HCT116 (cell line): ENCODE measurements at regions of chr3 and their contacts with region 1.

Region 1: DNA sequence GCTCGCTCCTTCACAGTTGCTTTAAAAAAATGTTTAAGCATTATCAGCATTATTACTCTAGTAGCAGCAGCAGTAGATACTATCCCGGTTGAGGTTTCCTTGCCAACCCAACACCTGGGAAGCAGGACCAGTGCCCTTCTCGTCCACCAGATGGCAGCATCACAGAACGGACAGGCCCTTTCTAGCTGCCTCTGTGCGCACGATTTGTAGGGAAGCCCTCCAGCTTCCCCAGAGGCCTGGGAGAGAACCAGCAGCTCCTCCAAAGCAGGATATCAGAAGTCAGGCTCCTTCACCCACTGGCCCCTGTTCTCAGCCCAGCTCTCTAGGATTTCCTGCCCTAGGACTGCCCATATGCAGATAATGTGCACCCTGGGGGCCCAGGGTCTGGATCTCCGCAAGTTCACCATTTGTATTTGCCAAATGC is 16.8 kb upstream of the ESYT3 start:
- DNase-seq: peak; percentile 77
- ATAC-seq: peak; percentile 99
- H3K4me3 ChIP-seq: no peak overlapping the region
- H3K27ac ChIP-seq: no peak overlapping the region
- H3K4me1 ChIP-seq: peaks cover 0 to 4% of the 10 kb centered on the region in 2 experiments; a peak in 1 of 4 replicates
- H3K27me3 ChIP-seq: no peaks in the 10 kb centered on the region
- CTCF ChIP-seq: peak; percentile 90 to 98 (median 98)
- POLR2A ChIP-seq: no peak
- RAD21 ChIP-seq: peak; percentile 89

Region 2: DNA sequence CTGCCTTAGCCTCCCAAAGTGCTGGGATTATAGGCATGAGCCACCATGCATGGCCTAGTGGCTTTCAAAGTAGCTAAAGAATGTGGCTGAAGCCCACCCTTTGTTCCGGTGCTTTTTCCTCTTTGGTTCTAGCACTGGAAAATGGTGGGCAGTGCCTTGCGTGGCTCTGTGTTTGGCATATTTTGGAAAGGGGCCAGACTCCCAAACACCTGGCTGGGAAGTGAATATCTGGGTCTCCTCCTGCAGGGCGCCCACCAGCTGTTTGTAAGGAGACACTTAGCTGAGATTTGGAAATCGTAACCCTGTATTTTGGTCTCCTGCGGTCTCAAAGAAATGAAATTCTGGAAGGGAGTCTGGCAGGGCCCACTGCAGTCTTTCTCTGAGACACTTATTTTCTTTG is 1123.4 kb before region 1 on chr3:
- CTCF ChIA-PET with region 1: no interaction called
- POLR2A ChIA-PET with region 1: no interaction called
- RAD21 ChIA-PET with region 1: no interaction called
- intact Hi-C with region 1: no loop called
- DNase-seq: no peak
- ATAC-seq: no peak
- H3K4me3 ChIP-seq: no peak overlapping the region
- H3K27ac ChIP-seq: no peak overlapping the region
- H3K4me1 ChIP-seq: no peaks in the 10 kb centered on the region
- H3K27me3 ChIP-seq: peaks cover 4% of the 10 kb centered on the region
- CTCF ChIP-seq: no peak
- POLR2A ChIP-seq: no peak
- RAD21 ChIP-seq: no peak

Region 3: GRCh38 chr3:138389841-138390586 is 27.6 kb before region 1 on chr3:
- CTCF ChIA-PET with region 1: interaction called, 15 read pairs
- POLR2A ChIA-PET with region 1: no interaction called
- RAD21 ChIA-PET with region 1: no interaction called
- intact Hi-C with region 1: no loop called
- DNase-seq: peak; percentile 76
- ATAC-seq: peak; percentile 94
- H3K4me3 ChIP-seq: peak overlapping the region in 1 of 2 experiments; percentile 43; a peak in 2 of 4 replicates
- H3K27ac ChIP-seq: peak overlapping the region; percentile 53
- H3K4me1 ChIP-seq: peaks cover 21 to 26% of the 10 kb centered on the region in 2 experiments
- H3K27me3 ChIP-seq: no peaks in the 10 kb centered on the region
- CTCF ChIP-seq: no peak
- POLR2A ChIP-seq: no peak
- RAD21 ChIP-seq: no peak